IMR-90 (cell line): ENCODE measurements at regions of chrX and their contacts with region 1.

Region 1: GRCh38 chrX:22135994-22136684 is 104.0 kb downstream of the PHEX start:
- DNase-seq: peak; percentile 60
- ATAC-seq: peak; percentile 48
- H3K4me3 ChIP-seq: no peak overlapping the region
- H3K27ac ChIP-seq: peak overlapping the region; percentile 96; the same call in 1 of the 2 replicates
- H3K4me1 ChIP-seq: peaks cover 7% of the 10 kb centered on the region
- H3K27me3 ChIP-seq: peaks cover 1% of the 10 kb centered on the region; the same call in 1 of the 2 replicates
- CTCF ChIP-seq: peak; percentile 67
- POLR2A ChIP-seq: no peak
- RAD21 ChIP-seq: peak; percentile 71

Region 2: DNA sequence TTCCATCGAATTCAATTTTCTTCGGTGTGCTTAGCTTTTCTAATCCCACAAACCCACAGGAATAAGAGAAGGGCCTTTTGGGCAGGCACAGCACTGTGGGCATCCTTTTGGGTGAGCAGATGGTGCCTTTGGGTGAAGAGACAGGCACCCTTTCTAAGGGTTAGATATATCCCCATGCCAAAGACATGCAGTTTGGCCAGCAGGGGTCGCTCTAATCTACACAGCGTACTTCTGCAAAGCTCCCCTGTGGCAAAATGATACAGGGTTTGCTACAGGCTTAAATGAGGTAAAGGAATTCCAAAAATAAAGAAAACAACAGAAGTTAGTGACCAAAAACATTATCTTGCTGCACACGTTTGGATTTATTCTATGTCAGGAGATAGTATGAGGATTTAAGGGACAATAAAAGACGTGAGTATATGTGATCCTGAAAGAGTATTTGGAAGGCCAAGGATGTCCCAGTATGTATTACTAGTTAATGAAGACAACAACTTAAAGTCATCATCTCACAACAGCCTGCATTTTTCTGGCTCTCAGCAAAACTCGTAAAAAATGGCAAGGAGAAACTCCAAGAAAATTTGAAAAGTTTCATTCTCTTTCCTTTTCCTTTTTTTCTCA is 54.6 kb before region 1 on chrX:
- CTCF ChIA-PET with region 1: interaction called, 4 read pairs
- POLR2A ChIA-PET with region 1: no interaction called
- dilution Hi-C with region 1: no loop called
- in situ Hi-C with region 1: no loop called
- intact Hi-C with region 1: loop called (anchors 1 kb)
- DNase-seq: peak; percentile 63
- ATAC-seq: peak; percentile 76
- H3K4me3 ChIP-seq: no peak overlapping the region
- H3K27ac ChIP-seq: no peak overlapping the region
- H3K4me1 ChIP-seq: no peaks in the 10 kb centered on the region; the same call in none of the 2 replicates
- H3K27me3 ChIP-seq: no peaks in the 10 kb centered on the region
- CTCF ChIP-seq: peak; percentile 67
- POLR2A ChIP-seq: no peak
- RAD21 ChIP-seq: peak; percentile 75

Region 3: DNA sequence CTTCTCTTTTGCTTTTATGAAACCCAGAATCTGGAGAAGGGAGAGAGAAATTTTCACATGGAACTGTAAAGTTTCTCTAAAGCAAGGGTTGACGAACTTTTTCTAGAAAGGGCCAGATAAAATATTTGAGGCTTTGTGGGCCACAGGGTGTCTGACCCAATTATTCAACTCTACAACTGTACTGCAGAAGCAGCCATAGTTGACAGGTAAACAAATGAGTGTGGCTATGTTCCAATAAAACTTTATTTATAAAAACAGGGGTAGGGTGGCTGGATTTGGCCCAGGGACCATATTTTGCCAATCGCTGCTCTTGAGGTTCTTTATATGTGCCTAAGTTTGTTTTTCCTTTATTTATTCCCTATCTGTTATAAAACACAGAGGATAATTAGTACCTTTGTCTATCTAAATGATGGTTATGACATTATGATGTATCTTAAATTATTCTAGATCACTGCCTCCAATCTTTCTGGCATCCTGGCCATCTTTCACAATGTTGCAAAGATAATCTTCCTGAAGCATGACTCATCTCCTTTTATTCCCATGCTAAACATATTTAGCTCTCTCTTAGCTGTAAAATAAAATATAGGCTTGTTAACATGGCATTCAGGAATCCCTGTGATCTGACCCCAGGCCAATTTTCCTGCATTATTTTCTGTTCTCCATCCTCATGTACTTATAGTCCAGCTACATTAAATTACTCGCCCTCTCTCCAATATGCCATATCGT is 29.8 kb after region 1 on chrX:
- CTCF ChIA-PET with region 1: no interaction called
- POLR2A ChIA-PET with region 1: no interaction called
- dilution Hi-C with region 1: no loop called
- in situ Hi-C with region 1: no loop called
- intact Hi-C with region 1: no loop called
- DNase-seq: peak; percentile 45
- ATAC-seq: peak; percentile 27; the same call in 1 of the 2 replicates
- H3K4me3 ChIP-seq: no peak overlapping the region
- H3K27ac ChIP-seq: no peak overlapping the region
- H3K4me1 ChIP-seq: no peaks in the 10 kb centered on the region
- H3K27me3 ChIP-seq: 0 out of 2 replicates have a peak, but pooled peaks cover 1% of the 10 kb centered on the region
- CTCF ChIP-seq: no peak
- POLR2A ChIP-seq: no peak
- RAD21 ChIP-seq: no peak

Region 4: GRCh38 chrX:22634083-22634482 is 497.9 kb after region 1 on chrX:
- CTCF ChIA-PET with region 1: no interaction called
- POLR2A ChIA-PET with region 1: no interaction called
- dilution Hi-C with region 1: no loop called
- in situ Hi-C with region 1: no loop called
- intact Hi-C with region 1: loop called (anchors 10 kb)
- DNase-seq: peak; percentile 79
- ATAC-seq: peak; percentile 64
- H3K4me3 ChIP-seq: no peak overlapping the region
- H3K27ac ChIP-seq: peak overlapping the region; percentile 62; the same call in 1 of the 2 replicates
- H3K4me1 ChIP-seq: peaks cover 2% of the 10 kb centered on the region
- H3K27me3 ChIP-seq: no peaks in the 10 kb centered on the region
- CTCF ChIP-seq: no peak
- POLR2A ChIP-seq: no peak
- RAD21 ChIP-seq: no peak

Region 5: DNA sequence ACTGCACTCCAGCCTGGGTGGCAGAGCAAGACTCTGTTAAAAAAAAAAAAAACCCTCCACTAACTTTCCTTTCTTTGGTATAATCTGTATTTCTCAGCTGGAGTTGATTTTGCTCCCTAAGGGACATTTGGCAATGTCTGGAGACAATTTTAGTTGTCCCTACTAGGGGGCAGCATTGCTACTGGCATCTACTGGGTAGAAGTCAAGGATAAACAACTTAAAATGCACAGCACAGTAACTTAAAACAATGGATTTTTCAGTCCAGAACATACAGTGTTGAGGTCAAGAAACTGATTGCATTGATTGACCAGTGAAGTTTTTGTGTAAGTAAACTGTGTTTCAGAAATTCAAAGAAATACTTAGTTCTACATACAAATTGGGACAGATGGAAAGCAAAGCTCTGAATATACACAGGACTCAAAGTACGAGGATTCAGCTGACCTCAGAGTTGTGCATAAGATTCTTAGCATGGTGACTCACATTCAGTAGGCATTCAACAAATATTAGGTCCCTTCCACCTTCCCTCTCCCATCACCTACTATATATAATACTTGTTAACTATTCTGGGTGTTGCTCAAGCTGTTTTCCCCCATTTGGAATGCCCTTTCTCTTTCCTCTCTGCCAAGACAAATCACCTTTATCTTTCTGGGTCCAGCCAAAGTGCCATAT is 872.4 kb after region 1 on chrX:
- CTCF ChIA-PET with region 1: no interaction called
- POLR2A ChIA-PET with region 1: interaction called, 5 read pairs
- dilution Hi-C with region 1: no loop called
- in situ Hi-C with region 1: no loop called
- intact Hi-C with region 1: loop called (anchors 5 kb)
- DNase-seq: peak; percentile 39
- ATAC-seq: peak; percentile 77
- H3K4me3 ChIP-seq: no peak overlapping the region
- H3K27ac ChIP-seq: no peak overlapping the region
- H3K4me1 ChIP-seq: no peaks in the 10 kb centered on the region
- H3K27me3 ChIP-seq: no peaks in the 10 kb centered on the region
- CTCF ChIP-seq: peak; percentile 31; the same call in 1 of the 2 replicates
- POLR2A ChIP-seq: no peak
- RAD21 ChIP-seq: 0 out of 2 replicates have a peak, but pooled peaks have one; percentile 10

Region 6: GRCh38 chrX:23554304-23554703 is 1418.2 kb after region 1 on chrX:
- CTCF ChIA-PET with region 1: no interaction called
- POLR2A ChIA-PET with region 1: no interaction called
- dilution Hi-C with region 1: no loop called
- in situ Hi-C with region 1: no loop called
- intact Hi-C with region 1: loop called (anchors 2 kb)
- DNase-seq: peak; percentile 50
- ATAC-seq: 0 out of 2 replicates have a peak, but pooled peaks have one; percentile 40
- H3K4me3 ChIP-seq: no peak overlapping the region
- H3K27ac ChIP-seq: no peak overlapping the region
- H3K4me1 ChIP-seq: no peaks in the 10 kb centered on the region
- H3K27me3 ChIP-seq: no peaks in the 10 kb centered on the region
- CTCF ChIP-seq: peak; percentile 57
- POLR2A ChIP-seq: no peak
- RAD21 ChIP-seq: peak; percentile 53